ENCODE measurements at regions of chr16 and their contacts with region 1.

Region 1: DNA sequence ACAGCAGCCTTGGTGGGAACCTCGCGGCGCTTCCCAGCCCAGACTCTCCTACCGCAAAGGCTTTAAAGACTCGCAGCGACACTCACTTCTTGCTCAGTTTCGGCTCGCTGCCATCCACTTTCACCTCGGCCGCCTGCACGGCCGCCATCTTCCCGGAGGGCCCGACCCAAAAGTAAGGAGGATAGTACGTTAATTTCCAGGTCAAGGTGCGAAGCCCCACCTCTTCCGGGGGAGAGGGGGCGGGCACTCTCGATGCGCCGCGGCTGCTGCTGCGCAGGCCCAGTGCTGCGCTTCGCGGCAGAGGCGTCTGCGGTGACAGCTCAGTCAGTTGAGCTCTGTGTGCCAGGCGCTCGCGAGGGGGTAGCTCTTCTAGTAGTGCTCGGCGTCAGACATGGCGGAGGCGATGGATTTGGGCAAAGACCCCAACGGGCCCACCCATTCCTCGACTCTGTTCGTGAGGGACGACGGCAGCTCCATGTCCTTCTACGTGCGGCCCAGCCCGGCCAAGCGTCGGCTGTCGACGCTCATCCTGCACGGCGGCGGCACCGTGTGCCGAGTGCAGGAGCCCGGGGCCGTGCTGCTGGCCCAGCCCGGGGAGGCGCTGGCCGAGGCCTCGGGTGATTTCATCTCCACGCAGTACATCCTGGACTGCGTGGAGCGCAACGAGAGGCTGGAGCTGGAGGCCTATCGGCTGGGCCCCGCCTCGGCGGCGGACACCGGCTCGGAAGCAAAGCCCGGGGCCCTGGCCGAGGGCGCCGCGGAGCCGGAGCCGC is at the starts of genes KARS1 and TERF2IP:
- DNase-seq: peak; percentile 97
- ATAC-seq: peak; percentile 92
- H3K4me3 Mint-ChIP-seq: peak within 1 kb of the TSS; percentile 85
- H3K27ac Mint-ChIP-seq: peak within 1 kb of the TSS; percentile 98
- H3K4me1 Mint-ChIP-seq: peaks cover 54% of the 10 kb centered on the region
- H3K27me3 Mint-ChIP-seq: no peaks in the 10 kb centered on the region
- total RNA-seq, gene KARS1: 309 to 332 TPM
- total RNA-seq, gene TERF2IP: 70.6 to 72.6 TPM

Region 2: DNA sequence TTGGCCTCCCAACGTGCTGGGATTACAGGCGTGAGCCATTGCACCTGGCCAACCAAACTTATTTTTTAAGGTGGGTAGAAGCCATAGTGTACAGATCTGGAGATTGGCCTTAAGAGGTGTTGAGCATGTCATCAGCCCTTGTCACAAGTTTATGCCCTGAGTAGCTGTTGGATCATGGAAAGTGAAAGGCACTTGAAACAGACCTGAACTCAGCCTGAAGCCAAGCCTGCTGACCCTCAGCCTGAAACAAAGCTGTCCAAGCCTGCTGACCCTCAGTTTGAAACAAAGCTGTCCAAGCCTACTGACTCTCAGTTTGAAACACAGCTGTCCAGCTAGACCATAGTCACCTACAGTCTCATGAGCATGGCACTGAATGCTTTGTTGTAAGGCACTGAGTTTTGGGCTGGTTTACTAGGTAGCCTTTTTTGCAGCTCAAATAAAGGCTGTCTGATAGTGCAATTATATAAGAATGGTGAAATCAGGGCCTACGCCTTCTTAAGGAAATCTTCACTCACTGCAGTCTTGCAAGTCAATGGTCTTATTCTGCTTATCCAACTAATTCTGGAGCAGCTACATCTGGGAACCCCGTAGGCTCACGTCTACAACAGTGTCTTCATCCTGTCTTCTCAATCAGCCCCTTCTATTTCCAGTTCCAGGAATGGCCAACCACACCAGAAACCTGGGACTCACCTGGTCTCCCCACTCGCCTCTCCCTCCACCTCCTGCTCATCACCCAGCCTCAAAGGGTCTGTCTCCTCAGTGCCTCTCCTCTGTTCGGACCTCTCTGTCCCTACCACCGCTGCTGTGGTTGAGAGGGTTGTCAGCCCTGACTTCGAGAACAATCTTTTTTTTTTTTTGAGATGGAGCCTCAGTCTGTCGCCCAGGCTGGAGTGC is 1274.5 kb before region 1 on chr16:
- CTCF ChIA-PET with region 1: no interaction called
- POLR2A ChIA-PET with region 1: no interaction called
- intact Hi-C with region 1: loop called in 1 of 2 experiments (anchors 5 kb)
- DNase-seq: no peak
- ATAC-seq: no peak
- H3K4me3 Mint-ChIP-seq: no peak overlapping the region
- H3K27ac Mint-ChIP-seq: no peak overlapping the region
- H3K4me1 Mint-ChIP-seq: no peaks in the 10 kb centered on the region
- H3K27me3 Mint-ChIP-seq: no peaks in the 10 kb centered on the region

Region 3: DNA sequence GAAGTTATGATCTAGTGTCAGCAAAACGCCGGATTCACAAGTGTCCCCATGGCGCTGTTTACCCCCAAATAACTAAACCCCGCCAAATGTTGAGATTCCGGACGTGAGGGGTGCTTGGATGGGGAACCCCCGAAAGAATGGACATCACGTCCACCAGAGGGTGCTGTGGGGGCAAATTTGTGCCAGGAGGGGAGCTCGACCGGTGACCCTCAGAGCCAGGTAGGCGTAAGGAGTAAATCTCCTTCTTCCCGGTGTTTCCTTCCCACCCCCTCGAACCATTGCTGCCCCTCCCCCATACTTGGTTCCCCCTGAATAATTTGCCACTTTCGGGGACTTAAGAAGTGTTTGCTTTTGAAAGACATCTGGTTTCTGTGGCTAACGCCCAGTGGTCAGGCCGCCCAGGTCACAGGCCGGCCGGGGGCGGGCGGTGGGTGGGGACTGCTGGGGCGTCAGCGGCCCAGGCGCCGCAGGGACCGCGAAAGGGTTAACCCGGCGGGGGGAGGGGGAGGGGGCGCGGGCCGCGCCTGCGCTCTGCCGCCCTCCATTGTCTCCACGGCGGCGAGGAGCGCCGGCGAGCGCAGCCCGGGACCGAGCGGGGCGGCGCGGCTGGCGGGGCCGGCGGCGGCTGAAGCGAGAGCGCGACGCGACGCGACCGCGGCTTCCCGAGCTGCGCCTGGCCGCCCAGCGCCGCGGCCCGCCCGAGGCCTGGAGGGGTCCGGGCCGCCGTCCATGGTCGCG is 649.0 kb before region 1 on chr16 and contains the start of gene ZNRF1:
- CTCF ChIA-PET with region 1: no interaction called
- POLR2A ChIA-PET with region 1: no interaction called
- intact Hi-C with region 1: loop called in 1 of 2 experiments (anchors 10 kb)
- DNase-seq: peak; percentile 91
- ATAC-seq: peak; percentile 80
- H3K4me3 Mint-ChIP-seq: peak within 1 kb of the TSS; percentile 87
- H3K27ac Mint-ChIP-seq: peak within 1 kb of the TSS; percentile 75
- H3K4me1 Mint-ChIP-seq: peaks cover 39% of the 10 kb centered on the region
- H3K27me3 Mint-ChIP-seq: peaks cover 4% of the 10 kb centered on the region
- total RNA-seq, gene ZNRF1: 35.2 to 42.9 TPM

Region 4: DNA sequence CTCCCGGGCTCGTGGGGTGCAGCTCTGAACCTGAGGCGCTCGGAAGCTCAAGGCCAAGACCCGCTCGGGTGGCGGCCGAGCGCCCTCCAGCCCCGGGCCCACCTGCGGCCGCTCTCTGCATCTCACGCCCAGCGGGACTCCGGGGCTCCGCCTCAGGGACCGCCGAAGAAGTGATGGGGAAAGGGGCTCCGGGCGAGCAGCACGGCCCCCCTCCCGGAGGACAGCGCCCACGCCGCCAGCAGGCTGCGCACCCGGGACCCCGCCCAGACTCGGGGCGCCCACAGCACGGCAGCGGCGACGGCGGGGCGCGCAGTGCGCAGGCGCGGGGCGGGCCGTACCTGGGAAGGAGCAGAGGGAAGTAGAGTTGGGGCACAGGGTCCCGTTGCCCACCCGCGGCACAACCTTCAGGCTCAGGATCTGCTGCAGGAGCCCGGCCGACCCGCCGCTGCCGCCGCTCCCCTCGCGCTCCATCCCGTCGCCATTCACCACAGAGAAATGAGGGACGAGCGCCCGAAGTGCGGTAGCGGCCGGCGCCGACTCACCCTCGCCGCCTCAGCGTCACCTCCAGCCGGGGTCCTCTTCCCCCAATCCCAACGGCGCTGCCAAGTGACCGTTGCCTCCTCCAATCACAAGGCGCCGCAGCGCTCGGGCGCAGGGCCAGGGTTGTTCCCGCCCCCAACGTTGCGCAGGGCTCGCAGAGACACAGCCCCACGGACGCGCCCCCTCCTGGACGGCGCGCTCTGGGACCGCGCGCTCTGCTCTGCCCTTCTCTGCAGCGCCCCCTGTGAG is 183.4 kb before region 1 on chr16 and contains the start of gene TMEM170A:
- CTCF ChIA-PET with region 1: interaction called, 10 read pairs
- POLR2A ChIA-PET with region 1: no interaction called
- intact Hi-C with region 1: loop called (anchors 1 kb)
- DNase-seq: peak; percentile 100
- ATAC-seq: peak; percentile 94
- H3K4me3 Mint-ChIP-seq: peak within 1 kb of the TSS; percentile 98
- H3K27ac Mint-ChIP-seq: peak within 1 kb of the TSS; percentile 94
- H3K4me1 Mint-ChIP-seq: peaks cover 45% of the 10 kb centered on the region
- H3K27me3 Mint-ChIP-seq: no peaks in the 10 kb centered on the region
- total RNA-seq, gene TMEM170A: 22.0 to 30.5 TPM

Region 5: GRCh38 chr16:75555707-75556430 is 91.8 kb before region 1 on chr16 and contains the start of gene TMEM231:
- CTCF ChIA-PET with region 1: interaction called, 5 read pairs
- POLR2A ChIA-PET with region 1: interaction called, 3 read pairs
- intact Hi-C with region 1: loop called (anchors 1 to 2 kb)
- DNase-seq: peak; percentile 99
- ATAC-seq: peak; percentile 98
- H3K4me3 Mint-ChIP-seq: peak within 1 kb of the TSS; percentile 79
- H3K27ac Mint-ChIP-seq: peak within 1 kb of the TSS; percentile 71
- H3K4me1 Mint-ChIP-seq: peaks cover 7% of the 10 kb centered on the region
- H3K27me3 Mint-ChIP-seq: peaks cover 3% of the 10 kb centered on the region
- total RNA-seq, gene TMEM231: 3.6 to 4.1 TPM

Region 6: GRCh38 chr16:75622761-75623605 is 24.7 kb before region 1 on chr16 and contains the start of gene ADAT1:
- CTCF ChIA-PET with region 1: interaction called, 26 read pairs
- POLR2A ChIA-PET with region 1: interaction called, 59 read pairs
- intact Hi-C with region 1: loop called (anchors 1 kb)
- DNase-seq: peak; percentile 99
- ATAC-seq: peak; percentile 94
- H3K4me3 Mint-ChIP-seq: peak within 1 kb of the TSS; percentile 93
- H3K27ac Mint-ChIP-seq: peak within 1 kb of the TSS; percentile 95
- H3K4me1 Mint-ChIP-seq: peaks cover 45% of the 10 kb centered on the region
- H3K27me3 Mint-ChIP-seq: no peaks in the 10 kb centered on the region
- total RNA-seq, gene ADAT1: 48.3 to 55.7 TPM

Region 7: DNA sequence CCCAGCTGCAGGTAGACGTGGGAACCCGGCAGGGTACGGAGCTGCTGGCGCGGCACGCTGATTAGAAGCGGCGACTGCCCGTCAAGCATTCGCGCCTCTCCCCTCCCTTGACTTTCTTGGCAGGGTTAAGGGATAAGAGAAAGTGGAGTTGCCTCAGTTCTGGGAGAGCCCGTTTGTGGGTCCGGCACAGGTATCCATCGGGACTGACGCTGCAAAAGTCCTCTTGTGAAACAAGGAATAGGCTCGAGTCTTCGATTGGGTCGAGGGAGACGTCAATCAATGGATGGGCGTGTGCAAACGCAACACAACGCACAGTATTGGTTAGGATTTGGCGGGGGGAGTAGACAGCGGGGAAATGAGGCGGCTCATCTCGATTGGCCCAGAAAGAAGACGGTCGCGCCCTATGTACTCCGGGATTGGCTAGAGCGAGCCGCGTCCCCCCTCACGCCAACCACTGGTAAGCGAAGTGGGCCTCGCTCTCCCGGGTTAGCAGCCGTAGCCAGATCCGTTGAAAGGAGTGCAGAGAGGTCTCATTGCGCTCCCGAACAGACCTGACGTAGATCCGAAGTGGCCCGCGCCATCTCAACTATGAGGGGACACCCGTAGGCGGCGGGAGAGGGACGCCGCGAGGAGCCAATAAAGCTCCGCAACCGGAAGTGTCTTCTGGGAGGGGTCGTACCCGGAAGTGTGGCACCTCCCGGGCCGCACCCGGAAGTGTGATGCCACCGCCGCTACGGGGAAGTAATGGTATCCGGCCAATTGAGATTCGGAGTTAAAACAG is 1543.0 kb after region 1 on chr16 and contains the start of gene MON1B:
- CTCF ChIA-PET with region 1: no interaction called
- POLR2A ChIA-PET with region 1: interaction called, 5 read pairs
- intact Hi-C with region 1: loop called (anchors 1 to 2 kb)
- DNase-seq: peak; percentile 96
- ATAC-seq: peak; percentile 99
- H3K4me3 Mint-ChIP-seq: peak within 1 kb of the TSS; percentile 99
- H3K27ac Mint-ChIP-seq: peak within 1 kb of the TSS; percentile 98
- H3K4me1 Mint-ChIP-seq: peaks cover 29% of the 10 kb centered on the region
- H3K27me3 Mint-ChIP-seq: peaks cover 2% of the 10 kb centered on the region
- total RNA-seq, gene MON1B: 58.0 to 63.4 TPM